Kidney (tissue), 22 donors: ENCODE measurements at regions of chr4 and their contacts with region 1.

Region 1: GRCh38 chr4:89024051-89024675 is 32.8 kb downstream of the FAM13A start:
- DNase-seq: peak in 4 of 5 donors; percentile 37 to 87 (median 69)
- H3K4me3 ChIP-seq: no peak overlapping the region
- H3K27ac ChIP-seq: no peak overlapping the region
- H3K4me1 ChIP-seq: peaks cover 0 to 2% (median 0%) of the 10 kb centered on the region in 3 donors
- H3K27me3 ChIP-seq: no peaks in the 10 kb centered on the region
- CTCF ChIP-seq: peak; percentile 94

Region 2: GRCh38 chr4:88706574-88706973 is 317.6 kb before region 1 on chr4:
- intact Hi-C with region 1: loop called (anchors 10 kb)
- DNase-seq: peak; percentile 37 to 78 (median 66)
- H3K4me3 ChIP-seq: no peak overlapping the region
- H3K27ac ChIP-seq: no peak overlapping the region
- H3K4me1 ChIP-seq: peaks cover 0 to 2% (median 0%) of the 10 kb centered on the region in 3 donors
- H3K27me3 ChIP-seq: no peaks in the 10 kb centered on the region
- CTCF ChIP-seq: peak; percentile 84

Region 3: GRCh38 chr4:88823058-88823919 is 200.9 kb before region 1 on chr4:
- intact Hi-C with region 1: loop called (anchors 10 kb)
- DNase-seq: peak; percentile 97 to 99 (median 97)
- H3K4me3 ChIP-seq: peak overlapping the region; percentile 62 to 89 (median 89)
- H3K27ac ChIP-seq: peak overlapping the region; percentile 95
- H3K4me1 ChIP-seq: peaks cover 4 to 25% (median 5%) of the 10 kb centered on the region in 3 donors
- H3K27me3 ChIP-seq: no peaks in the 10 kb centered on the region
- CTCF ChIP-seq: no peak